Head of caudate nucleus (tissue), 42 donors: ENCODE measurements at regions of chr6 and their contacts with region 1.

Region 1: DNA sequence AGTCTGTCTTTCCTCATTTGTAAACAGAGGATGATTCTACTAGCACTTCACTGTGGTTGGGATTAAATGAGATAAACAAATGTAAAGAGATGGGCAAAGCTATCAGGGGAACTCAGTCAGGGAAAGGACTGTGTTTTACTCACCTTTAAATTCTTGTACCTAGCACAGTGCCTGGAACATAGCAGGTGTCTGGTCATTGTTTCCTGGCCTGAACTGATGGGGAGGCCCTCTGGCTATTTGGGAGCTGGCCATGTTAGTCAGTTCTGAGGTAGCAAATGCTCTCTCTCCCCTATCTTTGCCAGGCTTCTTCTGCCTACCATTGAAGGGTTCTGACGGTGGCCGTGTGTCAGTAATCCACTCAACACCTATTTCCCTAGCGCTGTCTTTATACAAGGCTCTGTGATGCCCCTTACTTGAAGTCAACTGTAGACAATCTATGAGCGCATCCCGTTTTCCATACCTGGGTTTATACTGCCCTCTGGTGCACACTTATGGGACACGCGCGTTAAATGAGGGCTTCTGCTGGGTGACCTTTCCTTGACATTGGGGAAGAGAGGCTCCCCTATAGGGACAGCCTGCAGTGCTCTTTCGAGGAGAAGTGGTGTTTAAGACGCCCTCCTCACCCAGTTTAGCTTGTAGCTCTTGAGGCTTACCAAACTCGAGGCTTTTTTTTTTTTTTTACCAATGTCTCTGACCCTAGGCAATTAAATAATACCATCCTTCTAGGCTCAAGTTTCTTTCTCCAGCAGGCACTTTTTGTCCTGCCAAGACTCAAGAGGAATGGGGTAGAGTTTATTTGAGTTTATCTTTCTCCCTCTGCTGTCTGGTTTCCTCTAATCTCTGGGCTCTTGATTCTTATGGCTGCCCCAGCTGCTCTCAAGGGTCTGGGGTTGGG is 4.0 kb upstream of the SPATS1 start:
- DNase-seq: peak; percentile 30 to 87 (median 70)

Region 2: GRCh38 chr6:44172731-44173500 is 165.6 kb before region 1 on chr6:
- intact Hi-C with region 1: loop called (anchors 10 kb)
- DNase-seq: peak; percentile 63 to 94 (median 86)

Region 3: DNA sequence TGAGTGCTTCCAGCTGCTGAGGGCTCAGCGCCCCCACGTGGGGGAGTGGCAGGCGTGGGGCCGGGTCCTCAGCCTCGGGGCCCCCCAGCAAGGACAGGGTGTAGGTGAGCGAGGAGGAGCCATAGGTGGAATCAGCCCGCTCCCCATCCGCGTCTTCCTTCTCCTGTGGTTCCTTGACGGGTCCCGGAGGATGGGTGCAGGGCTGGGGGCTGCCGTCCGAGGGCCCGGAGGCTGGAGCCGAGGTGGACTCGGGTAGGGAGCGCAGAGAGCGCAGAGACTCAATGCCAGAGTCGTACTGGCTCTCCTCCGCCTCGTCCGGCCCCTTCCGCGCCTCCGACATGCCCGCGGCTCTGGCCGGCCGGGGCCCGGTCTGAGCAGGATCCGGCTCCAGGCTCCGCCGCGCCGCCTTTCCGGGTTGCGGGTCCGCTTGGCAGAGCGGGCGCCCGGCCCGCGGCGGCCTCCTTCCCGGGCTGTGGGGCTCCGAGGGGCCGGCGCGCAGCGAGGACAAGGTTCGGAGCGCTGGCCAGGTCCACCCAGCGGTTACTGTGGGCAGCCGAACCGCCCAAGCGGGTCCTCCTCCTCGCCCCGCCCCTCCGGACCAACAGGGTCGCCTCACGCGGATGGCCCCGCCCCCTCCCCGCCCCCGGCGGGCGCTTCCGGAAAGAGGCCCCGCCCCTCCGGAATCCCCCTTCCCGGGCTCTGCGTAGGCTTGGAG is 73.3 kb before region 1 on chr6 and contains the start of gene NFKBIE:
- intact Hi-C with region 1: loop called (anchors 5 kb)
- DNase-seq: peak; percentile 84 to 98 (median 94)

Region 4: GRCh38 chr6:44598679-44599078 is 260.2 kb after region 1 on chr6:
- intact Hi-C with region 1: no loop called
- DNase-seq: peak in 2 of 42 donors; percentile 8 to 34